AG04449 (cell line): ENCODE measurements at regions of chr17 and their contacts with region 1.

Region 1: DNA sequence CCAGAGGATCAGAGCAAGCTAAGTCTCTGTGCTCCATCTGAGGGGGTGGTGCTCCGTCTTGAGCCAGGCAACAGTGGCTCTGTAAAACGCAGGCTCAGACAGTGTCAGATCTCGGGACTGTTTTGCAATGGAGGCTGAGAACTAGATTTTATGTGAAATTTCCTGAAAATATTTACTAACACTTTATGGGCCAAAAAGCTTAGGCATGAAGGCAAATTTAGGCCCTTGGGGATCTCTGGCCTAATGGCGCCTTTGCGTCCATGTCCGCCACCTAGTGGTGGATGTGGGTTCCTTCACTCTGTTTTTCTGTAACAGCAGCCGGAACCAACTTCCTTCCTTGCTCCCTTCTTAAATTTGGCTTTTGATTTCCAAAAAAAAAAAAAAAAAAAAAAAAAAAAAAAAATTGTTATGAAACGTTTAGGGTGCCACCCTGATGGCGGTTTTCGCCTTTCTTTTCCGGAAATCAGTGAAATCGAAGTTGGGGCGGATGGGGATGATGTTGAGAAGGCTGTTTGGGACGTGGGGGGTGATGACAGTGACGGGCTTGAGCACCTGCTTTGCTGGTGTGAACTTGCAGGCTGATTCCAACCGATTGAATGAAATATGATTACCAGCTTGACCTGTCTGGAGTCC is 14.0 kb upstream of the ELAC2 start:
- DNase-seq: no peak
- H3K4me3 ChIP-seq: no peak overlapping the region
- CTCF ChIP-seq: peak; percentile 72

Region 2: GRCh38 chr17:12940699-12941098 is 91.1 kb before region 1 on chr17:
- CTCF ChIA-PET with region 1: no interaction called
- POLR2A ChIA-PET with region 1: no interaction called
- DNase-seq: no peak
- H3K4me3 ChIP-seq: no peak overlapping the region
- CTCF ChIP-seq: no peak

Region 3: DNA sequence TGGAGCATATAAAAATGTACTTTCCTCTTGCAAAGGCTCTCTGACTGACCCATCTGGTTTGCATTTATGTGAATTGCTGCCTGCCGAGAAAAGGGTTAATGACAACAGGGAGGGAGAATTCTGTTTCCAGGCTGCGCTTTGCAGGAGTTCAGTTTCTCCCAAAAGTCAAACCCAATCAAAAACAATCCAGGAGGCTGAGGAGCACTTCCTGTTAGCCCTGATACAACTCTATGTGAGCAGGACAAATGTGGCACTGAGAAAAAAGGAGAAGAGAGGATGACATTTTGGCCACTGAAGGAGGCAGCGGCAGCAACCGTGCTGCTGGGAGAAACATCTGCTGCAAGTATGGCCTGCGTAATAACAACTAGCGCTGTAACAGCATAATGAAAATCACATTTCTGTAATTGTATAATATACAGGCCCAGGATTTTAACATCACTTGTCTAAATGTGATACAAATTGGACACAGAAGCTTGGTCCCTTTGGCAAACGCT is 12.8 kb after region 1 on chr17:
- CTCF ChIA-PET with region 1: interaction called, 169 read pairs
- POLR2A ChIA-PET with region 1: no interaction called
- DNase-seq: no peak
- H3K4me3 ChIP-seq: no peak overlapping the region; the same call in 1 of the 2 replicates
- CTCF ChIP-seq: no peak

Region 4: GRCh38 chr17:13065032-13065431 is 33.2 kb after region 1 on chr17:
- CTCF ChIA-PET with region 1: interaction called, 14 read pairs
- POLR2A ChIA-PET with region 1: no interaction called
- DNase-seq: no peak
- H3K4me3 ChIP-seq: no peak overlapping the region
- CTCF ChIP-seq: no peak

Region 5: GRCh38 chr17:13140750-13141149 is 108.9 kb after region 1 on chr17:
- CTCF ChIA-PET with region 1: no interaction called
- POLR2A ChIA-PET with region 1: no interaction called
- DNase-seq: no peak
- H3K4me3 ChIP-seq: no peak overlapping the region
- CTCF ChIP-seq: peak; percentile 3

Region 6: GRCh38 chr17:13337864-13338371 is 306.1 kb after region 1 on chr17:
- CTCF ChIA-PET with region 1: interaction called, 26 read pairs
- POLR2A ChIA-PET with region 1: no interaction called
- DNase-seq: no peak
- H3K4me3 ChIP-seq: peak overlapping the region; percentile 43
- CTCF ChIP-seq: peak; percentile 59

Region 7: DNA sequence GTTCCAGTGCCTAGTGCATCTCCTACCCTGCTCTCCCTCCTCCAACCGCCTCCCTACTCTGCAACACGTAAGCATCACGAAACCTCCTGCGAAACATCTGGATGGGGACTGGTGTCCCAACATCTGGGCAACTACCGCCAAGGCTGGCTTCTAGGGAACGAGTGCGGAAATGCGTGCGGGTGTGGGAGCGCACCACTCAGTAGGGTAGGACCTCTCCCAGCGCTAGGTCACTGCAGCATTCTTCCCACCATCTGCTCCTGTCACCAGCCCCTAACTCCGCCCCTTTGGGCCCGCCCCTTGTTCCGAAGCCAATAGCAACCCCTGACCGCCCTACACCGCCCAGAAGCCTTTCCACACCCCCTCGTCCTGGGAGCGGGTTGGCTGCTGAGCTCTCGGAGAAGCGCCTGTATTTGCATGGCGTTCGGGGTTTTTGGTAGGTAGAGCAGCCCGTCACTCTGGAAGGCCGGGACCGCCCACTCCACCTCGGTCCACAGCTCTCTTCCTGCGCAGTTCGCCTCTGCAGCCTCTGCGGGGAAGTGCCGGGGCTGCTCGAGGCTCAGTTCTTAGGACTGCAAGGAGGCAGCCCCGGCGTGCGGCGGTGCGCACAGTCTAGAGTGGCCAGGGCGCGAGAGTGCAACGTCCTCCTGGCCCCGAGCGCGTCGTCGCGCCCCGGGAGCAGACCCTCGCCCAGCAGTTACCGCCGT is 1268.9 kb after region 1 on chr17 and contains the start of gene HS3ST3B1:
- CTCF ChIA-PET with region 1: interaction called, 22 read pairs
- POLR2A ChIA-PET with region 1: no interaction called
- DNase-seq: peak; percentile 99
- H3K4me3 ChIP-seq: peak within 1 kb of the TSS; percentile 98
- CTCF ChIP-seq: peak; percentile 23